Right ventricle myocardium superior (tissue), 1 donor: ENCODE measurements at regions of chr10 and their contacts with region 1.

Region 1: DNA sequence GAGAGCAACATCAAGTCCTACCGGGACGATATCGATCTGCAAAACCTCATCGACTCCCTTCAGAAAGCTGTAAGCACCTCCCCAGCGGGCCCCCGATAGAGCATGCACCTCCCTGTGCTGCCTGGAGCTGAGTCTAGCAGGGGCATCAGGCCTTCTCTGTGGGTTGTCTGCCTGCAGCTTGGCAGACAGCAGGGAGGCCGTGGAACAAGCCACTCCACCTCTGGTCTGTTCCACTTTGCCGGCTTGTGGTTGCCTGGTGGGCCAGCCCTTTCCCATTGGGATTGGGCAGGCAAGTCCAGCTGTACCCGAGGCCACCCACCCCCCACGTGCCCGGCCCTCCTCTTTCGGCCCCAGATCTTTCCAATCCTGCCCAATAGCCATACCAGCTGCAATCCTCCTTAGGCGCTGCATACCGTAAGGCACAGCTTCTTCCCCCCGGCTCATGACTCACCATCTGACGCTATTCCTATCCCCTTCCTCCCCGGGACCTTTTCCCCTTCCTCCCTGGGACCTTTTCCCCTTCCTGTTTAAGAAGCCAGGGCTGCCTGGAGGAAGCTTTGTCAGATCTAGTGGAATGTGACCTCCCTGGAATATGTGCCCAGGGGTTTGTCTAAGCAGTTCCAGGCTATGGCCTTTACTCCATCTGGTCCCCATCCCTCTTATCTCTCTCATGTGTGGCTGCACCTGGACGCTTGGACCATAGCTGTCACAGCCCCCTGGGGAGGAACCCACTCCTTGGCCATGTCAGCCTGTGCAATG is 28.1 kb upstream of the SH2D4B start:
- DNase-seq: peak; percentile 52
- ATAC-seq: peak; percentile 30

Region 2: DNA sequence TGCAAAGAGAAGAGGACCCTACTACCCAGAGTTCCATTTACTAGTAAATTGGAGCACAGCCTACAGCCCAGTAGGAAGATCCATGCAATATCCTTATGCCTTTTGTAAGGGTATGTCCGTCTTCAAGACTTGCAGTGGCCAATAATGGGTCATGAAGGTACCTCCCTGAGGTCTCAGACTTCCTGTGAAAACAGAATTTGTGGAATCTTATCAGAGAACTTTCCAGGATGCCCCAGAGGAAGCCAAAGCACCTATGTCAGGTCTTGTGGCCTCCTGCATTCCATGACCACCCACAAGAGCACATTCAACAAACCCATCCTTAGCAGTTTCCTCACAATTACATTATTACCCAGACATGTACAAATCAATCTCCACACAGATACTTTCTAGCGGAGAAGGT is 119.8 kb before region 1 on chr10:
- intact Hi-C with region 1: loop called (anchors 5 kb)
- DNase-seq: no peak
- ATAC-seq: no peak

Region 3: GRCh38 chr10:80647173-80647811 is 137.7 kb after region 1 on chr10:
- intact Hi-C with region 1: no loop called
- DNase-seq: no peak
- ATAC-seq: no peak

Region 4: GRCh38 chr10:80699602-80700039 is 190.0 kb after region 1 on chr10:
- intact Hi-C with region 1: no loop called
- DNase-seq: peak; percentile 87
- ATAC-seq: peak; percentile 90